HepG2 (cell line): ENCODE measurements at regions of chr12 and their contacts with region 1.

Region 1: GRCh38 chr12:102883204-102883799 is 33.7 kb downstream of the PAH start:
- DNase-seq: peak; percentile 48
- ATAC-seq: peak; percentile 47
- H3K4me3 ChIP-seq: no peak overlapping the region
- H3K27ac ChIP-seq: peak overlapping the region; percentile 96
- H3K4me1 ChIP-seq: peaks cover 57% of the 10 kb centered on the region
- H3K27me3 ChIP-seq: no peaks in the 10 kb centered on the region
- CTCF ChIP-seq: peak; percentile 95
- EP300 ChIP-seq: no peak
- POLR2A ChIP-seq: no peak
- RAD21 ChIP-seq: peak; percentile 92

Region 2: DNA sequence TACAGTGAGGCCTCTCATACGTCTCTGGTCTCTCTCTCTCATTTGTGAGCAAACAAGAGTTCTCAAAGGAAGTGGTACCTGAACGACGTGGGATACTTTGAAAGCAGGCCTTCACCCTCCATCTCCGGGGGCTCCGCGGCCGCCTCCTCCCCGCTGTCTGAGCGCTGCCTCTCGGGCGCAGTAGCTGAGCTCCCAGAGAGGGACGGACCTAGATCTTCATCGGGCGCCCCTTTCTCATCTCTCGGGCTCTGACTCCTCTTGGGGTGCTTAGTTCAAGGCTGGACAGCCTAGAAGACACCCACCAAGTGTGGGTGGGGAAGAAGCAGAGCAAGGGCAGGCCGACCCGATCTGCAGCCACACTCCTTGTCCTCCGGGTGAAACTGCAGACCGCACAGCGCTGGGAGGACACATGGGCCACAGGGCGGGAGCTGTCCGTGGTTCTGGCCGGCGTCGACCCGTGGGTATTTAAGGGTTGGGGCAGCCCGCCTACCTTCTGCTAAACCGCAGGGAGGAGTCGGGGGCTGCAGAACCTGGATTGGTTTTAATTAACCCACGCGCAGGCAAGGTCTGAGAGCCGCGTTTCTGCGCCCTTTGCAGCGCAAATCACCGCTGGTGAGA is 59.0 kb before region 1 on chr12:
- CTCF ChIA-PET with region 1: no interaction called
- POLR2A ChIA-PET with region 1: no interaction called
- in situ Hi-C with region 1: no loop called
- intact Hi-C with region 1: no loop called
- DNase-seq: peak; percentile 18
- ATAC-seq: peak; percentile 99
- H3K4me3 ChIP-seq: peak overlapping the region in 1 of 3 experiments; percentile 33; a peak in 1 of 6 replicates
- H3K27ac ChIP-seq: no peak overlapping the region
- H3K4me1 ChIP-seq: no peaks in the 10 kb centered on the region
- H3K27me3 ChIP-seq: peaks cover 2 to 10% of the 10 kb centered on the region in 2 experiments; a peak in 3 of 5 replicates
- CTCF ChIP-seq: peak; percentile 8; the same call in 1 of the 2 replicates
- EP300 ChIP-seq: no peak
- POLR2A ChIP-seq: no peak
- RAD21 ChIP-seq: no peak

Region 3: DNA sequence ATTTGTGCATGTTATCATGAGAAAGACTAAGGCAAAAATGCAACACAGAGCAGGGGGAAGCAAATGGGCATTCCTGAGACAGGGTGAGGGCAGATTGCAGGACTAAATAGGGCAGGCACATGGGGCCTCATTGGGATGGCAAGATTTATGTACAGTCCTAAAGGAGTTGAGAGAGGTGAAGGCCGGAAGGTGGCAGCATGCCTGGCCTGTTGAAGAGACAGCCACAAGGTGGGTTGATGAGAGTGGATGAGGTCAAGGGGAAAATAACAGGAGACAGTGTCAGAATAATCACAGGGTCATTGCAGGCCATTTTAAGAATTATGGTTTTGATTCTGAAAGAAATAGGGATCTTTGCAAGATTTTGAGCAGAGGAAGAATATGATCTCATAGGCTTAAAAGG is 12.8 kb after region 1 on chr12:
- CTCF ChIA-PET with region 1: no interaction called
- POLR2A ChIA-PET with region 1: interaction called, 106 read pairs
- in situ Hi-C with region 1: no loop called
- intact Hi-C with region 1: loop called (anchors 1 kb)
- DNase-seq: no peak
- ATAC-seq: no peak
- H3K4me3 ChIP-seq: no peak overlapping the region
- H3K27ac ChIP-seq: peak overlapping the region; percentile 44
- H3K4me1 ChIP-seq: peaks cover 63% of the 10 kb centered on the region
- H3K27me3 ChIP-seq: no peaks in the 10 kb centered on the region
- CTCF ChIP-seq: peak; percentile 31
- EP300 ChIP-seq: no peak
- POLR2A ChIP-seq: no peak
- RAD21 ChIP-seq: no peak

Region 4: DNA sequence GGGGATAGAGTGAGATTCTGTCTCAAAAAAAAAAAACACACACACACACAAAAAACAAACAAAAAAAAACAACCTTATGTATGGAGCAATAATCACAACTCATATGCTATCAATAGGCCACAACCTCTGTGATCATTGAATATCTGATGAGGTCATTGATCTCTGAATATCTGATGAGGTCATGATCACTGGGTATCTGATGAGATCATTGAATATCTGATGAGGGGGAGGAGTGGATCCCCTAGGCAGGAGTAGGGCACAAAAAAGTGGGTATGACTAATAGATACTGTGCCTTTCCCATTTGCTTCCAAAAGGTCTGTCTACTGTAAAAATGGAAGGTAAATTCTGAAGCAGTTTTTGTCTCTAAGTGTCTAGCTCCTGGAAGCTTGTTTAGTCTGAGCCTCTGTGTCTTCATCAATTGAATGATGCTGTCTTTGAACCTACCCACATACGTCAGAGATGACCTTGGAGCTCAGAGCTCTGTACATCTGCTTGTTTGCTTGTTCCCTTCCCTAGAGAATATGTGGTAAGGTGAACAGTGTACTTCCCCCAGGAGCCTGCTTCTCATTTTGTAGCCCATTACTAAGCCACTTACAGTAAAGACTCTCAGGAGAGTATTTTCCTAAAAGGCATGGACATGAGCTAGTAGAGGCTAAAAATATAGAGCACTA is 20.2 kb after region 1 on chr12:
- CTCF ChIA-PET with region 1: no interaction called
- POLR2A ChIA-PET with region 1: interaction called, 106 read pairs
- in situ Hi-C with region 1: no loop called
- intact Hi-C with region 1: loop called (anchors 1 kb)
- DNase-seq: peak; percentile 92
- ATAC-seq: peak; percentile 61
- H3K4me3 ChIP-seq: no peak overlapping the region
- H3K27ac ChIP-seq: peak overlapping the region; percentile 96
- H3K4me1 ChIP-seq: peaks cover 100% of the 10 kb centered on the region
- H3K27me3 ChIP-seq: no peaks in the 10 kb centered on the region
- CTCF ChIP-seq: no peak
- EP300 ChIP-seq: peak in 1 of 2 experiments; percentile 76; a peak in 2 of 4 replicates
- POLR2A ChIP-seq: no peak
- RAD21 ChIP-seq: no peak

Region 5: DNA sequence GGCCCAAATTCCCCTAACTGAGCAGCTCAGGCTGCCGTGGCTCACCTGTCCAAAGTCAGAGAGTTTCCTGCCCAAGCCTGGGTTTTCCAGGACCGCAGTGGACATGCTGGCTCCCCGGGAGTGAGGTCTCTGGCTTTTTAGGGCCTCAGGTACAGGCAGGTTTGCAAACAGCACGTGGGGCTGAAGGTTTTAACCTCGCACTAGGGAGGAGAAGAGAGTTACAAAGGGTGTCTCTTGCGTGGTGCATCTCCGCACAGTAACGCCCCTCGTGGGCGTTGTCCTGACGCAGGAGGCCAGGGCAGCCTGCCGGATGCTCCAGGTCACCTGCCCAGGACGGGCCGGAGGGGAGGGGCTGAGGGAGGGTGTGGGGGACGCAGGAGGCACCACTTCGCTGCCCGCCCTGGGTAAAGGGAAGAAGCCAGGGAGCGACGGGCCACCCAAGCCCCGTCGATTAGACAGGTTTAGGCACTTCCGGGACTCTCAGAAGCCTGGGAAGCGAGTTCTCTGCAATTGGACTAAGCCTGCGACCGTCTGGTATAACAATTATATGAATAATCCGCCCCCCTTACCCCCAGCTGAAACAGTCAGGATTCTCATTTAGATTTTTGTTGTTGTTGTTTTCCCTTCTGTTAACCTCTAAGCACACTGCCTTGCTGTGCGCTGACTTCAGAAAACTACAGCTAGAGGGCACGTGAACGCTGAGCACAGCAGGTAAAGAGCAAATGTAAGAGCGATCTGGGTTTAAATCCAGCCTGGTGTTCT is 33.9 kb after region 1 on chr12 and contains the start of gene PAH:
- CTCF ChIA-PET with region 1: no interaction called
- POLR2A ChIA-PET with region 1: interaction called, 40 read pairs
- in situ Hi-C with region 1: loop called (anchors 5 kb)
- intact Hi-C with region 1: loop called (anchors 1 kb)
- DNase-seq: peak; percentile 91
- ATAC-seq: peak; percentile 95
- H3K4me3 ChIP-seq: peak within 1 kb of the TSS; percentile 67 to 83 (median 74)
- H3K27ac ChIP-seq: peak within 1 kb of the TSS; percentile 92
- H3K4me1 ChIP-seq: peaks cover 83% of the 10 kb centered on the region
- H3K27me3 ChIP-seq: no peaks in the 10 kb centered on the region; a peak in 1 of 5 replicates
- CTCF ChIP-seq: peak; percentile 32
- EP300 ChIP-seq: peak in 1 of 2 experiments; percentile 59; a peak in 2 of 4 replicates
- POLR2A ChIP-seq: peak; percentile 85 to 88
- RAD21 ChIP-seq: no peak
- total RNA-seq, gene PAH: 451 and 537 TPM in 2 replicates

Region 6: GRCh38 chr12:102939670-102940222 is 56.4 kb after region 1 on chr12:
- CTCF ChIA-PET with region 1: interaction called, 56 read pairs
- POLR2A ChIA-PET with region 1: interaction called, 21 read pairs
- in situ Hi-C with region 1: loop called (anchors 5 kb)
- intact Hi-C with region 1: loop called (anchors 1 kb)
- DNase-seq: peak; percentile 62
- ATAC-seq: peak; percentile 98
- H3K4me3 ChIP-seq: no peak overlapping the region
- H3K27ac ChIP-seq: no peak overlapping the region
- H3K4me1 ChIP-seq: peaks cover 21% of the 10 kb centered on the region
- H3K27me3 ChIP-seq: no peaks in the 10 kb centered on the region
- CTCF ChIP-seq: peak; percentile 88
- EP300 ChIP-seq: no peak
- POLR2A ChIP-seq: no peak
- RAD21 ChIP-seq: peak; percentile 93

Region 7: GRCh38 chr12:103503977-103504376 is 620.7 kb after region 1 on chr12:
- CTCF ChIA-PET with region 1: no interaction called
- POLR2A ChIA-PET with region 1: no interaction called
- in situ Hi-C with region 1: no loop called
- intact Hi-C with region 1: loop called (anchors 2 kb)
- DNase-seq: peak; percentile 13
- ATAC-seq: peak; percentile 92
- H3K4me3 ChIP-seq: no peak overlapping the region
- H3K27ac ChIP-seq: no peak overlapping the region
- H3K4me1 ChIP-seq: no peaks in the 10 kb centered on the region
- H3K27me3 ChIP-seq: no peaks in the 10 kb centered on the region
- CTCF ChIP-seq: peak; percentile 62
- EP300 ChIP-seq: no peak
- POLR2A ChIP-seq: no peak
- RAD21 ChIP-seq: peak; percentile 58; the same call in 1 of the 2 replicates